Astrocyte of the cerebellum (primary cell): ENCODE measurements at regions of chr2 and their contacts with region 1.

Region 1: DNA sequence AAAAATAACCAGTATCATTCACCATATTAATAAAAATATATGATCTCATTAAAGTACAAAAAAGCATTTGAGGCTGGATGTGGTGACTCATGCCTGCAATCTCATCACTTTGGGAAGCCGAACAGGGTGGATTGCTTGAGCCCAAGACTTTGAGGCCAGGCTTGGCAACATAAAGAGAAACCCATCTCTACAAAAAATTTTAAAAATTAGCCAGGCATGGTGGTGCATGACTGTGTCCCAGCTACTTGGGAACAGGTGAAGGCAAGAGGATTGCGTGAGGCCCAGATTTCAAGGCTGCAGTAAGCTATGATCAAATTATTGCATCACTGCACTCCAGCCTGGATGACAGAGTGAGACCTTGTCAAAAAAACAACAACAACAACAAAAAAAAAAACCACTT is 75.9 kb downstream of the RAD51AP2 start:
- DNase-seq: no peak
- H3K4me3 ChIP-seq: no peak overlapping the region
- CTCF ChIP-seq: no peak

Region 2: GRCh38 chr2:17479875-17480274 is 37.5 kb after region 1 on chr2:
- in situ Hi-C with region 1: loop called (anchors 5 kb)
- DNase-seq: peak; percentile 22
- H3K4me3 ChIP-seq: no peak overlapping the region
- CTCF ChIP-seq: no peak